SK-N-SH (cell line): ENCODE measurements at regions of chr11 and their contacts with region 1.

Region 1: DNA sequence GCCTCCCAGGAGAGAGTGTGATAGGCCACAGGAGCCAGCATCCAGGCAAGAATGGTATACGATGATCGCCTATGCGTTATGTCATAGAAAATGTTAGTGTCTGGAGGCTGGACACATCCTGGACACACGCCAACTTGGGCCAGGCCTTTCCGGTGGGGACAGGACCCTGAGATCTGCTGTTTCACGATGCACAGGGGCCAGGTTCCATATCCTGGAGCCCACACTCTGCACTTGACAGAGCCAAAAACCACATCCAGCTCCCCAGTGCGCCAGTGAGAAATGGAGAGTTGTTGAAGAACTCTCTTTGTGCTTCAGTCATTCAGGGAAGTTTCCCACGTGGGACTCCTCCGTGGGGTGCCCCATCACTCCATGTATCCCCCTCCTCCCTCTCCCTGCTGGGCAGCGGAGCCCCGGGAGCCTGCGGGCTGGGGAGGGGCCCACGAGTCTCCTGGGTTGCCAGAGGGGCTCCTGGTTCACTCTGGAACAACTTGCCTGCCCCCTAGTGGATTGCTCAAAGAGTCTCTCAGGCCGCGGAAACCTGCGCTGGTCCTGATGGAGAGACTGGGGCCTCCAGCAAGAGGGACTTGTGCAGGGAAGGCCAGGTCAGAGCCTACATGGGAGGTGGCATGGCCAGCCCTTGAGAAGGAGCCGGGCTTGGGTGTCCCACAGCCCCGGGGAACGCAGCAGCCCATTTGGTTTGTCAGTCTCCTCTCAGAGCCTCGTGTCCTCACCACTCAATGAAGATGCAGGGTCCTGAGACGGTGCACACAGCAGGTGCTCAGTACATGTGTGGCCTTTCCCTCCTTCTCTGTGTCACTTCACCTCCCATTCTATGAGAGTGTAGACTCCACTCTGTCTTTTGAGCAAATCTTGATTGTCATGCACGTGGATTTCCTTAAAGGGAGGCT is 10.2 kb upstream of the LRRC32 start:
- DNase-seq: peak; percentile 91
- H3K4me3 ChIP-seq: no peak overlapping the region; a peak in 2 of 4 replicates
- H3K27ac ChIP-seq: no peak overlapping the region
- H3K4me1 ChIP-seq: peaks cover 0 to 21% of the 10 kb centered on the region in 2 experiments; a peak in 1 of 4 replicates
- H3K27me3 ChIP-seq: 0 out of 2 replicates have a peak, but pooled peaks cover 5% of the 10 kb centered on the region
- CTCF ChIP-seq: peak; percentile 88
- EP300 ChIP-seq: no peak
- RAD21 ChIP-seq: peak; percentile 92

Region 2: DNA sequence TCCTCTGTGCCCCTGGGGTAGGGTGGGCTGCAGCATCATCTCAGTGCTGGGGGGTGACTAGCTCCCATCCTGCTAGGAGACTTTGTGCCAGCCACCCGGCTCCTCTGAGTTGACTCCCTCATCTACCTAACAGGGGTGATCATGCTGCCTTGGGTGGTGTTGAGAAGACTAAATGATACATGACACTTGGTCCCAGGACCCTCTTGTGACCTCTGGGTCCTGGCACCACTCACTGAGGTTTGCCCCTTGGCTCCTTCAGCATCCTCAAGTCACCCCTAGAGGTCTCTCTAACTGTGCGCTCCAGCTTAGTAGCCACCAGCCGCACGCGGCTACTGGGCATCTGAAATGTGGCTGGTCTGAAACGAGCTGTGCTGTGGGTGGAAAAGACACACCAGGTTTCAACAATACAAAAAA is 82.3 kb before region 1 on chr11:
- CTCF ChIA-PET with region 1: interaction called, 55 read pairs
- POLR2A ChIA-PET with region 1: no interaction called
- DNase-seq: peak; percentile 72
- H3K4me3 ChIP-seq: no peak overlapping the region
- H3K27ac ChIP-seq: no peak overlapping the region
- H3K4me1 ChIP-seq: peaks cover 4 to 19% of the 10 kb centered on the region in 2 experiments; a peak in 2 of 4 replicates
- H3K27me3 ChIP-seq: no peaks in the 10 kb centered on the region
- CTCF ChIP-seq: peak; percentile 57
- EP300 ChIP-seq: no peak
- RAD21 ChIP-seq: peak; percentile 80

Region 3: DNA sequence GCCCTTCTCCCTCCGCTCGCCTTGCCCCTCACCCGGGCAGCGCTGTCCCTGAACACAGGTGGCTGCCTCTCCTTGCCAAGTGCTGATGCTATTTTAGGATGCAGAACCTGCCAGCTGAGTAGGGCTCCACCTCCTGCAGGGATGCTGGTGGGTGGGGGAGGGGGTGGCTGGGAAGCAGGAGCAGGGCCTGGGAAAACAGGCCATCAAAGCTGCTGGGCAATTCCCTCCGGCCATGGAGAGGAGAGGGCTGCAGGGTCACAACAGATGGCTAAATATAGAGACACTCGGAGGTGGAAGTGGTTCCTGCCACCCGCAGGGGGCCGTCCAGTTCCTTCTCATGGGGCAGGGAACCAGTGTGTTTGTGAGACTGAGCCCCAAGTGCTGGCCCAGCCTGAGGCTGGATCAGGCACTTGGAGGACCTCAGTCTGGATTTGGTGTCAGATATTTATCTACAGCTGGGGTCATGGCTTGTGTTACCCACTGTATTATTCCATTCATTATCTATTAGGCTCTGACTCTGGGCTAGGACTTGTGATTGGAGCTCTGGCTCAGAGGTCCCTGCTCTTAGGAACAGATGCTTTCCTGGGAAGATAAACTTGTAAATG is 69.8 kb before region 1 on chr11:
- CTCF ChIA-PET with region 1: interaction called, 25 read pairs
- POLR2A ChIA-PET with region 1: no interaction called
- DNase-seq: peak; percentile 84
- H3K4me3 ChIP-seq: no peak overlapping the region
- H3K27ac ChIP-seq: peak overlapping the region in 1 of 2 experiments; percentile 84; a peak in 2 of 4 replicates
- H3K4me1 ChIP-seq: peaks cover 0 to 51% of the 10 kb centered on the region in 2 experiments; a peak in 1 of 4 replicates
- H3K27me3 ChIP-seq: no peaks in the 10 kb centered on the region
- CTCF ChIP-seq: no peak
- EP300 ChIP-seq: peak in 1 of 2 experiments; percentile 81; a peak in 2 of 4 replicates
- RAD21 ChIP-seq: peak; percentile 43

Region 4: DNA sequence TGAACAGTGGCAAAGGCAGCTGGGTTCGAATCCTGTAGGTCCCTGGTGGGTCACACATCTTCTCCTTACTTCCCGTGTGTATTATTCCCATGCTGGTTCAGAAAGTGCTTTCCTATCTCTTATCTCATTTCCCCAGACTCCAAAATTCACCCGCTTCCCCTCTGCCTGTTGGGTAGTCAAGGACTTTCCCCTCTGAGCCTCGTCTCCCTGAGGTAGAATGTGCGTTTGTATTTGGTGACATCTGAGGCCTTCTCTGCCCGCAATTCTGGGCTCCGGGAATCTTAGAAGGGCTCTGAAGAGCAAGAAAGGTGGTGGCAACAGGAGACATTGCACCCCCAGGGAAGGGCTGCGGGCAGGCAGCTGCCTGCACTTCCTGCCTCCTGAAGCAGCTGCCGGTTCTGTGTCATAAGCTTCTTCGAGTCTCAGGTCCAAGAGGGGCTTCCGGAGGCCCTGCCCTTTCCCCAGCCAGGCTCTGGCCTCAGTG is 16.2 kb before region 1 on chr11:
- CTCF ChIA-PET with region 1: interaction called, 21 read pairs
- POLR2A ChIA-PET with region 1: no interaction called
- DNase-seq: peak; percentile 10
- H3K4me3 ChIP-seq: no peak overlapping the region
- H3K27ac ChIP-seq: no peak overlapping the region
- H3K4me1 ChIP-seq: no peaks in the 10 kb centered on the region; a peak in 1 of 4 replicates
- H3K27me3 ChIP-seq: no peaks in the 10 kb centered on the region
- CTCF ChIP-seq: no peak
- EP300 ChIP-seq: no peak
- RAD21 ChIP-seq: no peak

Region 5: DNA sequence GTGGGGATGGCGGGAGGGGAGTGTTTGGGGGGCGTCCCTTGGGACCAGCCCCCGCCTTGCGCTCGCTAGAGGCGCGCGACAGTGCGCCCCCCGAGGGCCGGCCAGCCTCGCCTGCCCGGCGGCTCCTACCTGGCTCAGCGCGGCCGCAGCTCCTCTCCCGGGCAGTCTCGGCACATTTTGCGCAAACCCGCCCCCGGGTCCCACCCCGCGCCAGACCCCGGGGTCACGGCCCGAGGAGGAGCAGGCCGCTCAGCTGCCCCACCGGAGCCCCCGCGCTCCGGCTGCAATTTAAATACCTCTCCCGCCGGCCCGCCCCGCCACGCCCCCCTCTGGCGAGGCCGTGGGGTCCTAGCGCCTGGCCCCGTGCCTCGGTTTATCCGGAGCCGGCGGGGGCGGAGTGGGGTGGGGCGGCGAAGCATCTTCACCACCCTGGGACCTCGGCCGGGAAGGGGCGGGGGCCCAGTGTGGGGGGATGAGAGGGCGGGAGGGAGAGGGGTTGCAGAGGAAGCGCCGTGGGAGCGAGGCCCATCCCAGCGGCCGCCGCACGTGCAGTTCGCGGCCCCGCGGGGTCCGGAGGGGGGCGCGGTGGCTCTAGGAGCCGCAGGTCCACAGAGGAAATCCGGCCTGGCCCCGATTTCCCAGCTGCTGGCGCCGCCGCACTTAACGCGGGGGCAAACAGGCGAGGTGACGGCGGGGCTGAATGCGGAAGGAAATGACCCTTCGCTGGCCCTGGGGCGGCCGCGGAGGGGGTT is 10.1 kb before region 1 on chr11 and contains the start of gene LRRC32:
- CTCF ChIA-PET with region 1: interaction called, 21 read pairs
- POLR2A ChIA-PET with region 1: no interaction called
- DNase-seq: peak; percentile 87
- H3K4me3 ChIP-seq: peak within 1 kb of the TSS; percentile 50 to 60
- H3K27ac ChIP-seq: no peak within 1 kb of the TSS
- H3K4me1 ChIP-seq: peaks cover 0 to 8% of the 10 kb centered on the region in 2 experiments; a peak in 1 of 4 replicates
- H3K27me3 ChIP-seq: no peaks in the 10 kb centered on the region
- CTCF ChIP-seq: 0 out of 2 replicates have a peak, but pooled peaks have one; percentile 2
- EP300 ChIP-seq: no peak
- RAD21 ChIP-seq: no peak
- polyA plus RNA-seq, gene LRRC32: 0.19 and 0.43 TPM in 2 replicates